ENCODE measurements at regions of chr10 and their contacts with region 1.

Region 1: GRCh38 chr10:103712570-103713498 is 142.5 kb downstream of the SH3PXD2A start:
- DNase-seq: peak; percentile 74 to 80 (median 75)
- ATAC-seq: peak; percentile 63 to 80 (median 79)
- H3K4me3 ChIP-seq: no peak overlapping the region
- H3K27ac ChIP-seq: no peak overlapping the region
- H3K4me1 ChIP-seq: peaks cover 0 to 24% (median 0%) of the 10 kb centered on the region in 12 donors
- H3K27me3 ChIP-seq: no peaks in the 10 kb centered on the region
- CTCF ChIP-seq: peak; percentile 78 to 93 (median 89)
- POLR2A ChIP-seq: no peak

Region 2: DNA sequence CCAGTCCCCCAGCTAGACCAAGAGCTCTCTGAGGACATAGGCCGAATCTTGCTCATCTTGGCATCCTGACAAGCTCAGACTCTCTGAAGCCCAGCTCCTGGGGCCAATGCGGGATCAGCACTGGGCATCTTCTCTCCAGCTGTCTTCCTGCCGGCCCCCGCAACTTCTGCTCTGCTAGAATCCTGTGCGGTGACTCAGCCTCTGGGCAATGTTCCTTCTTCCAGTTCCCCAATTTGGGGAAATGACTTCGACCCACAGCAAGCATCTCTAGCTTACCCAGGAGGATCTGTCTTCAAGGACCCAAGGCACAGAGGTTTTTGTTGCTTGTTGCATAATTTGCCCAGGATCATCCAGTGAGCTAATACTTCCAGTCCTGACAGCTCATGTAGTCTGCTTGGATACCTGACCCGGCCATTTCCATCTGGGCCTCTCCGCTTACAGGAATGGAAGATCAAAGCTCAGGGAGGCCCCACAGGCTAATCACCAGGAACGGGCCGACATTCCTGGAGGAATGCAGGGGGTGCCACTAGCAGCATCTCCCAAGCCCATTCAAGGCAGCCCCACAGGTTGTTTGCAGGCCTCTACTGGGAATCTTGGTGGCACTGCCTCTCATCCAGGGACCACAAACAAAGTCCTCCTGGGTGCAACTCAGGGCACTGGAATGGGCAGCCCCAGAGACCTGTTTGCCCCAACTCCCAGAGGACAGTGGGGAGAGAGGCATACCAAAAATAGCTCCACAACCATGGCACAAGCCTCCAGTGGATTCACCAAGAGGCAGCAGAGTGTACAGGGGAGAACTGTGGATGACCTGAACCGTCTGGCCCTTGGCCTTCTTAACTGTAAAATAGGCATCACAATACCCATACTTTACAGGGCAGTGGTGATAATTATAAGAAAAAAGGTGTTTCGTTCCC is 67.4 kb before region 1 on chr10:
- intact Hi-C with region 1: no loop called
- DNase-seq: peak; percentile 58 to 83 (median 72)
- ATAC-seq: peak; percentile 12 to 52 (median 38)
- H3K4me3 ChIP-seq: no peak overlapping the region
- H3K27ac ChIP-seq: peak overlapping the region in 7 of 12 donors; percentile 10 to 72 (median 53)
- H3K4me1 ChIP-seq: peaks cover 5 to 68% (median 50%) of the 10 kb centered on the region in 12 donors
- H3K27me3 ChIP-seq: no peaks in the 10 kb centered on the region
- CTCF ChIP-seq: no peak
- POLR2A ChIP-seq: no peak

Region 3: DNA sequence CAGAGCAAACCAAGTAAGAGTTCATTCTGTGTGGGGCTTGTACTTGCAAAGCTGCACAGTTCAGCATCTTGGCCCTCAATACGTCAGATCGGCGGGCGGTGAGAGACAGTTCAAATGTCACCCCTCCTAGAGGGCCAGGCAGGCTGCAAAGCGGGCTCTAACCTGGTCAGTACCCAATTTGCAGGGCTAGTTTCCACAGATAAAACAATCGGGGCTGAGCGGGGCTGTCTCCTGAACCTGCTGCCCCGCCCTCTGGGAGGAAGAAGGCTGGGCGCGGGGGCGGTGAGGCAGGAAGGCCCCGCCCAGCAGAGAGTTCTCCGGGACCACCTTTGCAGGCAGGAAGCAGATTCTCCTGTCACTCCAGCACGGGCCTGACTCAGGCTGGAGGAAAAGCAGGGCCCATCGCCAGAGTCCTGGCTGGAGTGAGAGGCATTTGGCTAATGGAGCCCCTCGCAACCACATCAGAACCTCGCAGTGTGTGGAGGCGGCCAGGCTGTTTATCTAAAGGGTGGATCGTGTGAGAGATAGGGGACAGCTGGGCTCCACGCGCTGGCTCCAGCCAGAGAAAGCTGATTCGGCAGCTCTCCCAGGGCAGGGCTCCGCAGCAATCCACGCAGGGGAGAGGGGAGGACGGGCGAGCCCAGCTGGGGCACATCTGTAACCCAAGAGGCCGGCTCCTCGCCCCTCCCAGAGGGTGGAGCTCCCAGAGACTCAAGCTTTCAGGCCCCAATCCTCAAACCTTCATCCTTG is 59.4 kb after region 1 on chr10:
- intact Hi-C with region 1: loop called in 2 of 10 experiments (anchors 5 kb)
- DNase-seq: peak; percentile 86 to 92 (median 89)
- ATAC-seq: peak; percentile 83 to 93 (median 90)
- H3K4me3 ChIP-seq: peak overlapping the region in 10 of 12 donors; percentile 22 to 59 (median 44)
- H3K27ac ChIP-seq: peak overlapping the region; percentile 56 to 89 (median 78)
- H3K4me1 ChIP-seq: peaks cover 0 to 40% (median 18%) of the 10 kb centered on the region in 12 donors
- H3K27me3 ChIP-seq: no peaks in the 10 kb centered on the region
- CTCF ChIP-seq: no peak
- POLR2A ChIP-seq: peak in 1 of 2 donors; percentile 23

Region 4: GRCh38 chr10:103995134-103995533 is 282.3 kb after region 1 on chr10:
- intact Hi-C with region 1: no loop called
- DNase-seq: no peak
- ATAC-seq: no peak
- H3K4me3 ChIP-seq: no peak overlapping the region
- H3K27ac ChIP-seq: no peak overlapping the region
- H3K4me1 ChIP-seq: peaks cover 0 to 11% (median 5%) of the 10 kb centered on the region in 12 donors
- H3K27me3 ChIP-seq: no peaks in the 10 kb centered on the region
- CTCF ChIP-seq: no peak
- POLR2A ChIP-seq: no peak

Region 5: GRCh38 chr10:104209575-104210198 is 496.9 kb after region 1 on chr10:
- intact Hi-C with region 1: loop called in 2 of 10 experiments (anchors 5 to 10 kb)
- DNase-seq: peak in 2 of 5 donors; percentile 20 to 33
- ATAC-seq: peak in 3 of 4 donors; percentile 49 to 71 (median 68)
- H3K4me3 ChIP-seq: no peak overlapping the region
- H3K27ac ChIP-seq: no peak overlapping the region
- H3K4me1 ChIP-seq: peaks cover 0 to 4% (median 0%) of the 10 kb centered on the region in 12 donors
- H3K27me3 ChIP-seq: no peaks in the 10 kb centered on the region
- CTCF ChIP-seq: peak; percentile 30 to 70 (median 52)
- POLR2A ChIP-seq: no peak